PC-3 (cell line): ENCODE measurements at regions of chr12 and their contacts with region 1.

Region 1: DNA sequence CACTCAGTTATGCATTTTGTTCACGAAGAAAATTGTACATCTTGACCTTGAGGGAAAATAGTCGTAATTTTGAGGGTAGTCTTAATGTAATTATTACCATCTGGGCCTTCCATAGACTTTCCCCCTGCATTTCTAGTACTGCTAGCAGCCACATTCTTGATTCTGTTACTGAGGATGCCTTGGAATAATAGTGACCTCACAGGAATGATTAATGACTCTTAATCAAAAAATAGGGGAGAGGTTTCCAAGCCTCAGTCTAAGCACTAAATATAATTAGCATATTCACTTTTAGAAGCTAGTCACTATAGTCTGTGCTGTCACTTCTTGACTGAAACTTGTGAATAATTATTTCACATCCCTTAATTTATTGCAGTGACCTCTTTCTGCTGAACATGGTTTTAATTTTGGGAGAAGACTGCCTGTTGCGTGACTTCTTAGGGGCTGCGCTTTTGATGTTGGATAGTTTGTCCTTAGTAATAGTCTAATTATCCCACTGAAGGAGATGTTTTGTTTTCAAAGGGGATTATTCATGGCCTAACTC is 400.5 kb downstream of the ADAMTS20 start:
- DNase-seq: no peak
- ATAC-seq: no peak
- H3K4me3 ChIP-seq: no peak overlapping the region
- H3K27ac ChIP-seq: no peak overlapping the region
- H3K4me1 ChIP-seq: no peaks in the 10 kb centered on the region
- H3K27me3 ChIP-seq: no peaks in the 10 kb centered on the region
- CTCF ChIP-seq: no peak

Region 2: GRCh38 chr12:43038991-43039390 is 112.5 kb before region 1 on chr12:
- CTCF ChIA-PET with region 1: no interaction called
- POLR2A ChIA-PET with region 1: no interaction called
- intact Hi-C with region 1: no loop called
- DNase-seq: no peak
- ATAC-seq: no peak
- H3K4me3 ChIP-seq: no peak overlapping the region
- H3K27ac ChIP-seq: no peak overlapping the region
- H3K4me1 ChIP-seq: no peaks in the 10 kb centered on the region
- H3K27me3 ChIP-seq: no peaks in the 10 kb centered on the region
- CTCF ChIP-seq: no peak

Region 3: DNA sequence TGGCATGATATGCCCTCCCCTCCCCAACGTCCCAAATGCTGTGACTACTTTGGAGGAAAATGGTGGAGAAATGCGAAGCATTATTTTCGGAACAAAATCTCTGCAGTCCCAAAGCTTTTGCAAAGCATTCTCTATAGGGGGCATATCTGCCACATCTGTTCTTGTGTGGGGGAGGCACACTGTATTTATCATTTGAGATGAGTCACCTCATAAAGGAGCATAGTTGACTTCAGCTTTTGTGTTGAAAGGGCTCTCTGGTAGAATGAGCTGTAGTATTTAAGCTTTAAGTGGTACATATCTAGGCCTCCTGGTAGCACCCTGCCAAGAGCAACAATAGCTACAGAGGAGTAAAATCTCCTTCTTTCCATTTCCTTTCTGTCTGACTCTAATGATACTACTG is 47.0 kb before region 1 on chr12:
- CTCF ChIA-PET with region 1: no interaction called
- POLR2A ChIA-PET with region 1: no interaction called
- intact Hi-C with region 1: loop called (anchors 10 kb)
- DNase-seq: peak; percentile 69
- ATAC-seq: peak; percentile 96
- H3K4me3 ChIP-seq: no peak overlapping the region
- H3K27ac ChIP-seq: no peak overlapping the region
- H3K4me1 ChIP-seq: peaks cover 15% of the 10 kb centered on the region
- H3K27me3 ChIP-seq: no peaks in the 10 kb centered on the region
- CTCF ChIP-seq: peak; percentile 37